ENCODE measurements at regions of chr5 and their contacts with region 1.

Region 1: GRCh38 chr5:151252762-151253604 is at the start of gene GM2A:
- DNase-seq: peak; percentile 92
- ATAC-seq: peak; percentile 83
- H3K4me3 Mint-ChIP-seq: peak within 1 kb of the TSS; percentile 96
- H3K27ac Mint-ChIP-seq: peak within 1 kb of the TSS; percentile 96
- H3K4me1 Mint-ChIP-seq: peaks cover 65% of the 10 kb centered on the region
- H3K27me3 Mint-ChIP-seq: no peaks in the 10 kb centered on the region
- CTCF ChIP-seq: no peak
- total RNA-seq, gene GM2A: 51.3 and 53.1 TPM in 2 replicates

Region 2: GRCh38 chr5:150357326-150358260 is 895.4 kb before region 1 on chr5 and contains the start of gene TCOF1:
- CTCF ChIA-PET with region 1: no interaction called
- POLR2A ChIA-PET with region 1: no interaction called
- intact Hi-C with region 1: loop called (anchors 5 kb)
- DNase-seq: peak; percentile 98
- ATAC-seq: peak; percentile 97
- H3K4me3 Mint-ChIP-seq: peak within 1 kb of the TSS; percentile 89
- H3K27ac Mint-ChIP-seq: peak within 1 kb of the TSS; percentile 93
- H3K4me1 Mint-ChIP-seq: peaks cover 49% of the 10 kb centered on the region
- H3K27me3 Mint-ChIP-seq: no peaks in the 10 kb centered on the region
- CTCF ChIP-seq: no peak
- total RNA-seq, gene TCOF1: 74.7 and 76.1 TPM in 2 replicates

Region 3: GRCh38 chr5:150624334-150625163 is 628.4 kb before region 1 on chr5:
- CTCF ChIA-PET with region 1: no interaction called
- POLR2A ChIA-PET with region 1: interaction called, 3 read pairs
- intact Hi-C with region 1: loop called (anchors 10 kb)
- DNase-seq: peak; percentile 44
- ATAC-seq: peak; percentile 23
- H3K4me3 Mint-ChIP-seq: peak overlapping the region; percentile 94
- H3K27ac Mint-ChIP-seq: peak overlapping the region; percentile 76
- H3K4me1 Mint-ChIP-seq: peaks cover 57% of the 10 kb centered on the region
- H3K27me3 Mint-ChIP-seq: no peaks in the 10 kb centered on the region
- CTCF ChIP-seq: no peak

Region 4: DNA sequence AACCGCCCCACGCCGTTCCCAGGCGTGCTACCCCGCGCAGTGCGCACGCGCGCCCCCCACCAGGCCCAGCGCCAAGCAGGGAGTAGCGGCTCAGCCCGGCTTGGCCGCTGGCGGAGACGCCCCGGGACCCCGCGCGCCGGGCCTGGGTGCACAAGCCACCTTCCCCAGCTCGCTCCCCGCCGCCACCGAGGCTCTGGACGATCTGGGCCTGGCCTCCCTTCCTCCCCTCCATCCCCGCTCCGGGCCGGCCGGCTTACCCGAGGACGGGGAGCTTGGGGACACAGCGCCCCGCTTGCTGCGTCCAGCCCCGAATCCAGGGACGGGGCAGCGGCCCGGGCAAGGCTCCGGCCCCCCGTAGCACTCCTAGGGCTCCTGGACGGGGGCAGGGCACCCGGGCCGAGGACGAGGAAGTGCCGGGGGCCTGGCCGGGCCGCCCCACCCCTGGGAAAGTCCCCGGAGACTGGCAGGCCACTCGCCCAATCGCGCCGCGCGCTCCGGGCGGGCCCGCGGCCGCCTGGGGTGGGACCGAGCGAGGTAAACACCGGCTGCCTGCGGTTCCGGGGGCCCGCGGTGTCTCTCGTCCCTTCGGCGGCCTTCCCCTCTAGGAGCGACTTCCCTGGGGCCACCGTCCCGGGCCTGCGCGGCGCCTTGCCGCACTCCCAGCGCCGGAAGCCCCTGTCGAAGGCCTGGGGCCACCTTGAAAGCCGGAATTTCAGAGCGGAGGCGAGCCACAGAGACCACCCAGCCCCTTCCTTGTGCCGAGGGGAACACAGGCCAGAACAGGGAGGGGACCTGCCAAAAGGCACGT is 172.2 kb before region 1 on chr5 and contains the start of gene TNIP1:
- CTCF ChIA-PET with region 1: no interaction called
- POLR2A ChIA-PET with region 1: interaction called, 15 read pairs
- intact Hi-C with region 1: loop called (anchors 5 kb)
- DNase-seq: peak; percentile 99
- ATAC-seq: peak; percentile 81
- H3K4me3 Mint-ChIP-seq: peak within 1 kb of the TSS; percentile 93
- H3K27ac Mint-ChIP-seq: peak within 1 kb of the TSS; percentile 94
- H3K4me1 Mint-ChIP-seq: peaks cover 88% of the 10 kb centered on the region
- H3K27me3 Mint-ChIP-seq: no peaks in the 10 kb centered on the region
- CTCF ChIP-seq: no peak
- total RNA-seq, gene TNIP1: 506 and 512 TPM in 2 replicates

Region 5: GRCh38 chr5:151213800-151214613 is 39.0 kb before region 1 on chr5:
- CTCF ChIA-PET with region 1: no interaction called
- POLR2A ChIA-PET with region 1: interaction called, 39 read pairs
- intact Hi-C with region 1: loop called (anchors 1 kb)
- DNase-seq: peak; percentile 62
- ATAC-seq: peak; percentile 72
- H3K4me3 Mint-ChIP-seq: peak overlapping the region; percentile 66
- H3K27ac Mint-ChIP-seq: peak overlapping the region; percentile 94
- H3K4me1 Mint-ChIP-seq: peaks cover 96% of the 10 kb centered on the region
- H3K27me3 Mint-ChIP-seq: no peaks in the 10 kb centered on the region
- CTCF ChIP-seq: no peak

Region 6: GRCh38 chr5:151270599-151270998 is 17.6 kb after region 1 on chr5:
- CTCF ChIA-PET with region 1: no interaction called
- POLR2A ChIA-PET with region 1: interaction called, 8 read pairs
- intact Hi-C with region 1: loop called (anchors 1 kb)
- DNase-seq: no peak
- ATAC-seq: peak; percentile 95
- H3K4me3 Mint-ChIP-seq: no peak overlapping the region
- H3K27ac Mint-ChIP-seq: no peak overlapping the region
- H3K4me1 Mint-ChIP-seq: peaks cover 3% of the 10 kb centered on the region
- H3K27me3 Mint-ChIP-seq: no peaks in the 10 kb centered on the region
- CTCF ChIP-seq: no peak